Activated CD8-positive, alpha-beta T cell treated with anti-CD3 and anti-CD28 coated beads for 36 hours (primary cell): ENCODE measurements at regions of chr2 and their contacts with region 1.

Region 1: DNA sequence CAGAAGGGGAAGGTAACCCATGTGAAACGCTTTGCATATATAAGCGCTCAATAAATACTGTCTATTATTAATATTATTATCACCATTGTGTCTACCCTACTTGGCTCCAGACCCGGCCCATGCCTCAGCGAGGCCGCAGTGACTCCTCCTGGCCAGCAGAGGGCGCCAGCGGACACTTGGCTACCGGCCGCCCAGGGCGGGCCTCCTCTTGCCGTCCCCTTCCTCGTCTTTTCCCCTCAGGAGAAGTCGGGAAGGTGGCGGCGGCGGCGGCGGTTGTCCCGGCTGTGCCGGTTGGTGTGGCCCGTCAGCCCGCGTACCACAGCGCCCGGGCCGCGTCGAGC is at the start of gene AGFG1:
- DNase-seq: peak; percentile 87
- ATAC-seq: peak; percentile 87
- H3K4me3 Mint-ChIP-seq: peak within 1 kb of the TSS; percentile 90
- H3K27ac Mint-ChIP-seq: peak within 1 kb of the TSS; percentile 85
- H3K4me1 Mint-ChIP-seq: peaks cover 54% of the 10 kb centered on the region
- H3K27me3 Mint-ChIP-seq: no peaks in the 10 kb centered on the region
- CTCF ChIP-seq: peak; percentile 97
- total RNA-seq, gene AGFG1: 117 to 119 TPM

Region 2: DNA sequence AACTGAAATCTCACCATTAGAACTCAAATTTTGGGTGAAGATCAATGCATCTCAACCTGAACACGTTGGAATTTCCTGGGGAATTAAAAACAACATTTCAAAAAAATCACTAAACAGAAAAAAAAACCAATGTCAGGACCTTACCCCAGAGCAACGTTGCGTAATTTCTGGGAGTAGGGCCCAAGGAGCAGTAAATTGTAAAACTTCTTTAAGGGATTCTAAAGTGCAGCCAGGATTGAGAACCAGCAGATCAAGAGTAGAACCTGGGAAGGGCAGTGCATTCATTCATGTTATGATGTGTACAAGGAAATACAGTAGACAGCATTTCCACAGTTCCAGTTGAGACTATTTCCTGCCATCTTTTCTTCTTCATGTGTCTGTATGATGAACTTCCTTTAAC is 579.2 kb before region 1 on chr2:
- CTCF ChIA-PET with region 1: no interaction called
- POLR2A ChIA-PET with region 1: no interaction called
- intact Hi-C with region 1: no loop called
- DNase-seq: no peak
- ATAC-seq: no peak
- H3K4me3 Mint-ChIP-seq: no peak overlapping the region
- H3K27ac Mint-ChIP-seq: no peak overlapping the region
- H3K4me1 Mint-ChIP-seq: no peaks in the 10 kb centered on the region
- H3K27me3 Mint-ChIP-seq: no peaks in the 10 kb centered on the region
- CTCF ChIP-seq: no peak

Region 3: DNA sequence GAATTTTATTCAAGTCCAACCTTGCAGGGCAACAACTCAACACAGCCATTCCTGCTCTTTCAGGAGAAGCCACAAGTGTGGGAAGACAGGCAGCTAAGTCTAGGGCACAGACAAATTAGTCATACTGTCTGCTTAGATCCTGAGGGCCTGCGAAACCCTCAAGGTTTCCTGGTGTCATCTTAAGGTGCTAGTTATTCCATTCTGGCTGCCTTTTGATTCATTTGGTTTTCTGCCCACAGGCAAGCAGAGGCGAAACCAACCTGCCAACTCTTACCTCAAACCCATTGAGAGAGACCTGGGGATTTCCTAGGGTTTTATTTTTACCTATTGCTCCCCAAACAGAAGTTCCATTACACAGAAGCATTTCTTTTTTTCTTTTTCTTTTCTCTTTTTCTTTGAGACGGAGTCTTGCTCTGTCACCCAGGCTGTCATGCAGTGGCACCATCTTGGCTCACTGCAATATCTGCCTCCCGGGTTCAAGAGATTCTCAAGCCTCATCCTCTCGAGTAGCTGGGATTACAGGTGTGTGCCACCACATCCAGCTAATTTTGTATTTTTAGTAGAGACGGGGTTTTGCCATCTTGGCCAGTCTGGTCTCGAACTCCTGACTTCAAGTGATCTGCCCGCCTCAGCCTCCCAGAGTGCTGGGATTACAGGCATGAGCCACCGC is 60.4 kb before region 1 on chr2:
- CTCF ChIA-PET with region 1: interaction called, 28 read pairs
- POLR2A ChIA-PET with region 1: interaction called, 4 read pairs
- intact Hi-C with region 1: no loop called
- DNase-seq: peak; percentile 82
- ATAC-seq: peak; percentile 84
- H3K4me3 Mint-ChIP-seq: peak overlapping the region; percentile 40
- H3K27ac Mint-ChIP-seq: peak overlapping the region; percentile 90
- H3K4me1 Mint-ChIP-seq: peaks cover 64% of the 10 kb centered on the region
- H3K27me3 Mint-ChIP-seq: no peaks in the 10 kb centered on the region
- CTCF ChIP-seq: no peak